PC-9 (cell line): ENCODE measurements at regions of chr10 and their contacts with region 1.

Region 1: DNA sequence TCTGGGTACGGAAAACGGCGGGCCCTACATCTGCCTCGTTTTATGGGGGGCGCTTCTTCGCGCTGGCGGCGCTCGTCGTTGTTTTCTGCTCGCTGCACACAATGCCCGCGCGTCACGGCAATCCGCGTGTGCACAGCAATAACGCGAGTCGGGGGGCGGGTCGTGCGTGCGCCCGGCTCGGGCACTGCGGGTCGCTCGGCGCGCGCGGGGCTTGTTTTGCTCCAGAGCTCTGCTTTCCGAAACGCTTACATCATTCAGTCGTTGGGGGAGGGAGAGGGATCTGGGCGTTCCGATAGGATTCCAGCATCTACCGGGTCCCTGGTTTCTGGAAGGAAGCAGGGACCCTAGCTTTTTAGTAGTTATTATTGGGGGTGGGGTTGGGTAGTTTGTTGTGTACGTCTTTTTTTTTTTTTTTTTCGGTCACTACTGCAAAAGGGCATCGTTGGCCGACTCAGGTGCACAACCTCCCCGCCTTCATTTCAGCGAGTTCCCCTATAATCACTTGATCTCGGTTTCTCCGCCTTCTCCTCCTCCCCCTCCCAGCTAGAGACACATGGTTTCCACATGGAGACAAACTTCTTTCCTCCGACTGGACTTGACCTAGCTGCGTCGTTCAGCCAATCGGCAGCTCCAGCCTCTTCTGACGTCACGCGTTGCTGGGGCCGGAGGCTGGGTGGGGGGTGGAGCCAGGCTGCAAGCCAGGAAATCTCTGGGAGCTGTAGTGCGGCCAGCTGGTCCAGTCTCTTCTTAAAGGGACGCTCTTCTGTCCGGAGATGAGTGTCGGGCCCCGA is 3.5 kb downstream of the MXI1 start:
- DNase-seq: peak; percentile 93
- H3K4me3 ChIP-seq: peak overlapping the region; percentile 80
- H3K27ac ChIP-seq: peak overlapping the region; percentile 60
- H3K4me1 ChIP-seq: no peaks in the 10 kb centered on the region; the same call in 1 of the 2 replicates
- H3K27me3 ChIP-seq: no peaks in the 10 kb centered on the region
- CTCF ChIP-seq: no peak

Region 2: DNA sequence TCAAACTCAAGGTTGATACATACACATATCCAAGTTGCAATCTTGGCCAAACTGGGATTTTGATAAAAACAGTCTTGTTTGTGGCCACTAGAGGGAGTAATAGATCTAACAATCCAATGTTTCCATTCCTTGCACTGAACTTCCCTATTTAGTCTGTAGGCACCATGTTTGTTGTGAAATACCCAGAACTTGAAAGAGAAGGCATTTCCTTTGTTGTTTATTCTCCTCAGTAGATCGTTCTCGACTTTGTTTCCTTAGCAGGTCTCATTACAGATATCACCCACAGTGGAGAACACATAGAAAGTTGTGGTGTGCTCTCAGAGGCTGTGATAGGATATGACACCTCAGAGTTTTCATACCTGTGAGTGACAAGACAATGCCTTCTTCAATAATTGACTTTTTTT is 73.7 kb before region 1 on chr10:
- CTCF ChIA-PET with region 1: interaction called, 3 read pairs
- POLR2A ChIA-PET with region 1: no interaction called
- intact Hi-C with region 1: loop called (anchors 1 kb)
- DNase-seq: peak in 1 of 2 experiments; percentile 57
- H3K4me3 ChIP-seq: no peak overlapping the region
- H3K27ac ChIP-seq: no peak overlapping the region
- H3K4me1 ChIP-seq: 0 out of 2 replicates have a peak, but pooled peaks cover 4% of the 10 kb centered on the region
- H3K27me3 ChIP-seq: no peaks in the 10 kb centered on the region
- CTCF ChIP-seq: peak; percentile 81

Region 3: DNA sequence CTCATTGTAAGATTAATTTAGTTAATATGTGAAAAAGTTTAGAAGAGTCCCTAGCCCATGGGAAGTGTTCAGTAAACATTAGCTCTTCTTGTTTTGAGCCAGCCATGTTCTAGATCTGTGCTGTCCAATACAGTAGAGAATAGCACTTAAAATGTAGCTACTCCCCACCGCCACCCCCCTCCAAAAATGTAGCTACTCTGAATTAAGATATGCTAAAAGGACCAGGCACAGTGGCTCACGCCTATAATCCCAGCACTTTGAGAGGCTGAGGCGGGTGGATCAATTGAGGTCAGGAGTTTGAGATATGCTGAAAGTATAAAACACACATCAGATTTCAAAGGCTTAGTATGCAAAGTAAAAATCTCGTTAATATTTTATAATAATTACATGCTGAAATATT is 50.8 kb before region 1 on chr10:
- CTCF ChIA-PET with region 1: no interaction called
- POLR2A ChIA-PET with region 1: interaction called, 20 read pairs
- intact Hi-C with region 1: no loop called
- DNase-seq: no peak
- H3K4me3 ChIP-seq: no peak overlapping the region
- H3K27ac ChIP-seq: no peak overlapping the region
- H3K4me1 ChIP-seq: no peaks in the 10 kb centered on the region
- H3K27me3 ChIP-seq: no peaks in the 10 kb centered on the region
- CTCF ChIP-seq: no peak

Region 4: GRCh38 chr10:110279407-110279986 is 68.6 kb after region 1 on chr10:
- CTCF ChIA-PET with region 1: no interaction called
- POLR2A ChIA-PET with region 1: interaction called, 3 read pairs
- intact Hi-C with region 1: loop called (anchors 1 kb)
- DNase-seq: peak; percentile 20 to 39
- H3K4me3 ChIP-seq: no peak overlapping the region
- H3K27ac ChIP-seq: no peak overlapping the region
- H3K4me1 ChIP-seq: no peaks in the 10 kb centered on the region
- H3K27me3 ChIP-seq: no peaks in the 10 kb centered on the region
- CTCF ChIP-seq: peak; percentile 68

Region 5: DNA sequence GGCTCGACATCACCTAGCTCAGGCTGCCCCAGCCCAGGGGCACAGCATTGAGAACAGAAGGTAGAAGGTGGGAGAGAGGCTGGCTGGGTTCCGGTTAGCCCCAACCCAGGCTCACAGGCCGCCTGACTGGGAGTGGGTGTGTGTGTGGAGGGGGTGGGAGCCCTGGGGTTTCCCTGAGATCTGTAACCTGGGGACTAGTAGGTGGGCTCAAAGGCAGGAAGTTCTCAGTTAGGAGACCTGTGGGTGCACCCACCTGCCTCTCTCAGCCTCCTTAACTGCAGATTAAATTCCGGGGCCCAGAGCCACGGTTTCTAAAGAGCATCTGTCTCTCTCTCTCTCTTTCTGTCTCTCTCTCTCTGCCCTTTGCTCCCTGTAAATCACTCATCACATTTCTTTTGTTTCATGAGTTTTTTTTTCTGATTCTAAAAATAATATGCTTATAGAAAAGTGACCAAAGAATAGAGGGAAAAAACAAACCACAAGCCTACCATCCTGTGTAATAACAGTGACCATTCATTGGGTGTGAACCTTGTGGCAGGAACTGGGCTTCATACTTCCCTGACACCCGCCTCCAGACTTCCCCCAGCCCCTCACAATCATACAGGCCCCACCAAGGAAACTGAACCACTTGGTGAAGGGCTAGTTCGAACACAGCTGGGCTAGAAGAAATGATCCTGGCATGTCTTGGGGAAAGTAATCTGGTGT is 177.3 kb after region 1 on chr10:
- CTCF ChIA-PET with region 1: no interaction called
- POLR2A ChIA-PET with region 1: no interaction called
- intact Hi-C with region 1: no loop called
- DNase-seq: no peak
- H3K4me3 ChIP-seq: no peak overlapping the region
- H3K27ac ChIP-seq: no peak overlapping the region
- H3K4me1 ChIP-seq: peaks cover 20% of the 10 kb centered on the region
- H3K27me3 ChIP-seq: no peaks in the 10 kb centered on the region
- CTCF ChIP-seq: no peak

Region 6: GRCh38 chr10:110664483-110665420 is 453.9 kb after region 1 on chr10:
- CTCF ChIA-PET with region 1: no interaction called
- POLR2A ChIA-PET with region 1: interaction called, 10 read pairs
- intact Hi-C with region 1: no loop called
- DNase-seq: peak; percentile 72 to 93
- H3K4me3 ChIP-seq: no peak overlapping the region
- H3K27ac ChIP-seq: peak overlapping the region; percentile 56
- H3K4me1 ChIP-seq: peaks cover 7% of the 10 kb centered on the region
- H3K27me3 ChIP-seq: no peaks in the 10 kb centered on the region
- CTCF ChIP-seq: no peak